ENCODE measurements at regions of chr12 and their contacts with region 1.

Region 1: GRCh38 chr12:76455582-76456345 is 103.8 kb downstream of the OSBPL8 start:
- DNase-seq: no peak
- H3K4me3 ChIP-seq: no peak overlapping the region
- H3K27ac ChIP-seq: no peak overlapping the region
- H3K4me1 ChIP-seq: peaks cover 0 to 8% (median 3%) of the 10 kb centered on the region in 4 donors
- H3K27me3 ChIP-seq: no peaks in the 10 kb centered on the region
- CTCF ChIP-seq: peak in 3 of 4 experiments; percentile 28 to 46 (median 32)
- EP300 ChIP-seq: no peak
- POLR2A ChIP-seq: no peak

Region 2: GRCh38 chr12:76422543-76423438 is 33.0 kb before region 1 on chr12:
- intact Hi-C with region 1: loop called (anchors 5 kb)
- DNase-seq: no peak
- H3K4me3 ChIP-seq: peak overlapping the region in 2 of 4 donors; percentile 13 to 17
- H3K27ac ChIP-seq: peak overlapping the region in 1 of 4 donors; percentile 14
- H3K4me1 ChIP-seq: peaks cover 0 to 18% (median 11%) of the 10 kb centered on the region in 4 donors
- H3K27me3 ChIP-seq: no peaks in the 10 kb centered on the region
- CTCF ChIP-seq: no peak
- EP300 ChIP-seq: no peak
- POLR2A ChIP-seq: no peak

Region 3: DNA sequence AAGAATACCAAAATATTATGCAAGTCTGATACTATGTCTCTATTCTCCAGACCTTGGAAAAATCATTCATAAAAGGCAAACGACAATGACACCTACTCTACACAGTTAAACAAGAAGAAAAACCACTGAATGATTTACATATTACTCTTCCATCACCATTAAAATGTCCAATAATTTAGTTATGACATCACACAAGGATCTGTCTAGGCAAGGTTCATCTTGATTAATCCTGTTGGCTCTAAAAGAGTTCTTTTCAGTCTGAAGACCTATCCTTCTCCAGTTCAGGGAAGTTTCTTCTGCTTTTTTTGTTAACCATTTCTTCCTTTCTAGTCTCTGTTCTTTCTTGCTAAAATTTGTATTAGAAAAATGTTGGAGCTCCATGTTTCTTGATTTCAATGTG is 39.8 kb after region 1 on chr12:
- intact Hi-C with region 1: no loop called
- DNase-seq: no peak
- H3K4me3 ChIP-seq: no peak overlapping the region
- H3K27ac ChIP-seq: no peak overlapping the region
- H3K4me1 ChIP-seq: no peaks in the 10 kb centered on the region
- H3K27me3 ChIP-seq: no peaks in the 10 kb centered on the region
- CTCF ChIP-seq: no peak
- EP300 ChIP-seq: no peak
- POLR2A ChIP-seq: no peak